Left cardiac atrium (tissue), 4 donors: ENCODE measurements at regions of chr12 and their contacts with region 1.

Region 1: DNA sequence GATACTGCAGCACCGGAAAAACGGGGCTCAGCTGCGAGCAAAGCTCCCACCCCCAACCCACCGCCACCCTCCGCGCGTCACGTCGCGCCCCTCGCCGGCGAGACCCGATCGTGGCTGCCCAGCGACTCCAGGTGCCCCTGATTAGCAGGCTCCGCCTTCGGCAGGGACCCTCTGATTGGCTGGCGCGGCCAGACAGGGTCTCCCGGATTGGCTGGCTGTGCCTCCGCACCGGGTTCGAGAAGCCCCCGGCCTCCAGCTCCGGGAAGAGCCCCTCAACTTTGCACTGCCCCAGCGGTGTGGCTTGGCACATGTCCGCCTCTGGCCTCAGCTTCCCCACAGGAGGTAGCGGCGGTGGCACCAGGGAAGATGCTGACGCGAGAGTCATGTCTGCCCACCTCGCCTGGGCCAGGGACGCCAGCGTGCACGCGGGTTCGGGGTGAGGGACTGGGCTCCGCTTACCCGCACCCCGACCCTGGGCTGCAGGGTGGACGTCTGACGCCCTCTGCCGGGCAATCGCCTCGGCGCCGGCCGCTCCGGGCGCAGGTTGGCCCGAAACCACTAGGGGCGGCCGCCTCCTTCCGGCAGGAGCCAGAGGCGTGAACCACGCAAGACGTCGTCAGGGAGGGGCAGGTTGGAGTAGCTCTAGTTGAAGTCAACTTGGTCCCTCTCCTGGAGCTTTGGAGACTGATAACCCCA is 498 bp upstream of the RHOF start:
- DNase-seq: peak; percentile 94
- ATAC-seq: peak; percentile 70 to 72

Region 2: DNA sequence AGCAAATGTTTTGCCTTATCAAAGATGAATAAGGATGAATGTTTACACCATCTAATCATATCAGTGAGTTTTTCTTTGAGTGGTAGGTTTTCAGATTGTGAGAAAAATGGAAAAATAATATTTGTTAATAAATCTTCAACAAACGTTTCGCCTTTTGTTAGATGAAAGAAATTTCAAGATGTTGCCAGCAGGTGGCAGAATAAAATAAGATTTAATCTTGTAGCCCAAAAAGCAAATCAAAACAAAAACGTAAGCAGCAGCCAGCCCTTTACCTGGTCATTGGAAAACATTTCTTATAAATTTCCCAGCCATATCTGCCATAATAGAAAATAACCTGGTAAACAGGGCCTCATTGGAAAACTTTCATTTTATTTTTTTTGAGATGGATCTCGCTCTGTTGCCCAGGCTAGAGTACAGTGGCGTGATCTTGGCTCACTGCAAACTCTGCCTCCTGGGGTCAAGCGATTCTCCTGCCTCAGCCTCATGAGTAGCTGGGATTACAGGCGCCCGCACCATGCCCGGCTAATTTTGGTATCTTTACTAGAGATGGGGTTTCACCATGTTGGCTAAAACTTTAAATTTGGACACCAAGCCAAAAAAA is 96.8 kb before region 1 on chr12:
- intact Hi-C with region 1: loop called (anchors 5 kb)
- DNase-seq: no peak
- ATAC-seq: no peak

Region 3: DNA sequence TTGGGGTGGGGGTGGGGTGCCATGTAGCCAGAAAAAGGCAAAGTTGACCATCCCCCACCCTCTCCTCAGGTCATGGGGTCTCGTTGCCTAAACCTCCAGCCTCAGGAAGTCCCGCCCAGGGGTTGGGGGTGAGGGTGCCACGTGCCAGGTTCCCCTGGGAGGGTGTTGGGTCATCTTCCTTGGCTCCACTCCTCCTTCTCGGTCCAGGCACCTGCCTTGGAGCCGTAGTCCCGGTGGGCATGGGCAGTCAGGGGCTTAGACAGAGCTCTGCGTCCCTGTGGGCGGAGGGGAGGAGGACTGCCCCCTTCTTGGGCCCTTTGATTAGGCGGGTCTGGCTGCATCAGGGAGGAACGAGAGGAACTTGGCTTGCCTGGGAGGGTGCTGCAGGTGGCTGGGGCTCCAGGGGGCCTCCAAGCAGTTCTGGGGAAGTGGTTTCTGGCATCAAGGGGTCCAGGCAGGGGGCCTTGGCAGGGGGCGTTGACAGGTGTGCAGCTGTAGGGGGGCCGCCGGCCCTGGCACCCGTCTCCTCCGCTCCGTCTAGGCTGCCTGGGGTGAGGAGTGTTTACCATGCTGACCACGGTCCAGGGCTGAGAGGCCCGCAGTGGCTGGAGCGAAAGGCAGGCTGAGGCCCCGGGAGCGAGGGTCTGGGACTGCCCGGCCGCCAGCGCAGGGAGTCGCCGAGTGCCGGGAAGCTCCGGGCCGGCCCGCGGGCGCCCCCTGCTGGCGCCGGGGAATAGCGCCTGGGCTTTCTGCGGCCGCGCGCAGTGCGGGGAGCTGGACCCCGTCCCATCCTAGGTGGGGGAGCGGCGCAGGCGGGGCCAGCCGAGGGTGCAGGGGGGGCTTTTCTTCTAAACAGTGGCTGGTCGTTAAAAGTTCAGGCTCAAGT is 17.7 kb after region 1 on chr12:
- intact Hi-C with region 1: loop called in 1 of 2 experiments (anchors 1 kb)
- DNase-seq: peak; percentile 78
- ATAC-seq: peak; percentile 90

Region 4: DNA sequence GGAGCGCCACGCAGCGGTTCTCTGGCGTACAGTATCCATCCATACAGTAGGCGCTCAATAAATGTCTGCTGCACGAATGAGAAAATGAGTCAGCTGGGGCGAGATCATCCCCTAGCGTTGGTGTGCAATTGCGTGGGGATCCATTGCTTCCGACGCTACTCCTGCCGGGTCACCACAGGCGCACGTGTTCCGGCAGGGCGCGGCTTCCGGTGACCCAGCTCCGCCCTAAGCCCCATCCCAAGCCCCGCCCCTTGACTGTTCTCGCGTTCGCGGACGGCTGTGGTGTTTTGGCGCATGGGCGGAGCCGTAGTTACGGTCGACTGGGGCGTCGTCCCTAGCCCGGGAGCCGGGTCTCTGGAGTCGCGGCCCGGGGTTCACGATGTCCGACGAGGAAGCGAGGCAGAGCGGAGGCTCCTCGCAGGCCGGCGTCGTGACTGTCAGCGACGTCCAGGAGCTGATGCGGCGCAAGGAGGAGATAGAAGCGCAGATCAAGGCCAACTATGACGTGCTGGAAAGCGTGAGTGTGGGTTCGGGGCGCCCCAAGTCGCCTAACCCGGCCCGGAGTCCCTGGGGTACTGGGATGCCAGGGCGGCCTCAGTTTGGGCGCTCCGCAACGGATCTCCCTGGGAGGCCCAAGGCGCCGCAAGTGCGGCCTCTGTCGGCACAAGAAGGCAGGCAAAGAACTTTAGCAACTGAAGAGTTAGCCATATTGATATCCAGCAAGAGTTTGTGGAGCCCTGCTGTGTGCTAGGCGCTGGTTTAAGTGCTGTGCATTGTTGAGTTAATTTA is 94.7 kb after region 1 on chr12 and contains the start of gene PSMD9:
- intact Hi-C with region 1: loop called in 1 of 2 experiments (anchors 2 kb)
- DNase-seq: peak; percentile 98
- ATAC-seq: peak; percentile 99
- total RNA-seq, gene PSMD9: 33.2 to 34.1 TPM

Region 5: DNA sequence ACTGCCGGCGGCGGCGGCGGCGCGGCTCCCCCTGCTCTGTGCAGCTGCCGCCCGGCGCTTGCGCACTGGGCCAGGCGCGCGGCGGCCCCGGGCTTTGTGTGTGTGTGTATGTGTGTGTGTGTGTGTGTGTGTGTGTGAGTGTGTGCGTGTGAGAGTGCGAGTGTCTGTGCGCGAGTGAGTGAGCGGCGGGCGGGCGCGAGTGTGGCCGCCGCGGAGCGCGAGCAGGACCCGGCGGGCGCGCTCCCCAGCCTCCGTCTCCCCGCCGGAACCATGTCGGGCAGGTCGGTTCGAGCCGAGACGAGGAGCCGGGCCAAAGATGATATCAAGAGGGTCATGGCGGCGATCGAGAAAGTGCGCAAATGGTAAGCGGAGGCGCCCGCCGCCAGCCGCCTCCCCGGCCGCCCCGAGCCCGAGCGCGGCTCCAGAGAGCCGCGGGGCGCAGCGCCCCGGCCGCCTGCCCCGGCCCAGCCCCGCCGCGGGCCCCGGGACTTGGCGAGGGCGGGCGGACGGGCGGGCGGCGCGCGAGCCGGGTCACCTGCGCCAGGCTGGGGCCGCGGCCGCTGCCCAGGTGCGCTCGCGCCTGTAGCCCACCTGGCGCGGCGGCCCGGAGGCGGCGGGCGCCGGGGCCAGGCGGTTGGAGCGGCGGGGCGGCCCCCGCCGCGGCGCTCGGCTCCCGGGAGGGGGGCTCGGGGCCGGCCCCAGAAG is 228.0 kb after region 1 on chr12 and contains the start of gene BCL7A:
- intact Hi-C with region 1: no loop called
- DNase-seq: peak; percentile 70
- ATAC-seq: peak; percentile 76 to 77
- total RNA-seq, gene BCL7A: 9.8 to 11.3 TPM